Right cardiac atrium (tissue), 5 donors: ENCODE measurements at regions of chr16 and their contacts with region 1.

Region 1: DNA sequence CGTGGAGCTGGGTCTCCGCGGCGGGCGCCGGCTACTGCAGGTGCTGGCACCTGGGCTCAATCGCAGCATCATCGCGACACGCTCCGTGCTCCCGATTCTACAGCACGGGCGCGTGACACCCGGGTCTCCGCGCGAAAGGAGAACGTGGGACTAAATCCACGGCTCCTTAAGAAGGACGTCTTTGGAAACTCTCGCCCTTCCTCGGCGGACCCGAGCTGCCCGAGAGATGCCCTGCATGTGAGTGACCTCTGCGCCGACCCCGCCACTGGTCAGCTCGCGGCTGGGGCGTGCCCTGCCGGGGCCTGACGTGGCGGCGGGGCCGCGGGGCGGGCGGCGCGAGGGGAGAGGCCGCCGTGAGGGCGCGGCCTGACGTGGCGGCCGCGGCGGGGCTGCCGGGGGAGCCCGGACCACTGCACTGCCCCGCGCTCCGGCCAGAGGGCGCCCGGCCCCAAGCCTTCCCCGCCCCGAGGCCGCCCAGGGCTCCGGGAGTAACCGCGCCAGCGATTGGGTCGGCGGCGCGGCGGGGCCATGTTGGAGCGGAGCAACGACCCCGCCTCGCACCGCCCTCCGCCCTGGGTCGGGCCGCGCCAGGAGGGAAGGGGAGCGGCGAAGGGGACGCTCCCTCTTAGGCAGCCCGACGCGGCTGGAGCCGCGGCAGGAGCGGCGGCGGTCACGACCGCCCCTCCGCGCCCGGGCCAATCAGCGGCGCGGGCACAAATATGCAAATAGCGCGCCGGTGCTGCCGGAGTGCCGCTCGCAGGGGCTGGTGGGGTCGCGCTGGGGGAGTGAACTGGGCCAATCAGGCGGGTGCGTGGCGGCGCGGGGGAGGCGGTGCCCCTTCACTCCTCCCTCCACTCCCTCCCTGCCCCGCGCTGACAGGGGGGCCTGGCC is 75.6 kb downstream of the CHD9 start:
- DNase-seq: peak; percentile 99
- ATAC-seq: peak; percentile 96
- H3K4me3 ChIP-seq: peak overlapping the region; percentile 98
- H3K27ac ChIP-seq: peak overlapping the region; percentile 94
- H3K4me1 ChIP-seq: peaks cover 3% of the 10 kb centered on the region
- H3K27me3 ChIP-seq: no peaks in the 10 kb centered on the region

Region 2: GRCh38 chr16:53099318-53100130 is 30.9 kb before region 1 on chr16:
- intact Hi-C with region 1: loop called in 1 of 4 experiments (anchors 5 kb)
- DNase-seq: peak; percentile 96 to 98 (median 97)
- ATAC-seq: peak; percentile 95
- H3K4me3 ChIP-seq: peak overlapping the region; percentile 8
- H3K27ac ChIP-seq: peak overlapping the region; percentile 96
- H3K4me1 ChIP-seq: peaks cover 7% of the 10 kb centered on the region
- H3K27me3 ChIP-seq: no peaks in the 10 kb centered on the region

Region 3: GRCh38 chr16:53183442-53183841 is 53.0 kb after region 1 on chr16:
- intact Hi-C with region 1: loop called in 1 of 4 experiments (anchors 10 kb)
- DNase-seq: no peak
- ATAC-seq: no peak
- H3K4me3 ChIP-seq: no peak overlapping the region
- H3K27ac ChIP-seq: no peak overlapping the region
- H3K4me1 ChIP-seq: no peaks in the 10 kb centered on the region
- H3K27me3 ChIP-seq: no peaks in the 10 kb centered on the region

Region 4: GRCh38 chr16:53207810-53208752 is 77.7 kb after region 1 on chr16:
- intact Hi-C with region 1: loop called in 3 of 4 experiments (anchors 5 to 10 kb)
- DNase-seq: peak in 2 of 3 donors; percentile 35 to 54
- ATAC-seq: peak; percentile 95 to 96
- H3K4me3 ChIP-seq: peak overlapping the region; percentile 92
- H3K27ac ChIP-seq: peak overlapping the region; percentile 100
- H3K4me1 ChIP-seq: no peaks in the 10 kb centered on the region
- H3K27me3 ChIP-seq: no peaks in the 10 kb centered on the region

Region 5: GRCh38 chr16:53219795-53220454 is 89.5 kb after region 1 on chr16:
- intact Hi-C with region 1: loop called in 1 of 4 experiments (anchors 10 kb)
- DNase-seq: no peak
- ATAC-seq: peak; percentile 73 to 82
- H3K4me3 ChIP-seq: no peak overlapping the region
- H3K27ac ChIP-seq: no peak overlapping the region
- H3K4me1 ChIP-seq: peaks cover 9% of the 10 kb centered on the region
- H3K27me3 ChIP-seq: no peaks in the 10 kb centered on the region